HCT116 (cell line): ENCODE measurements at regions of chr2 and their contacts with region 1.

Region 1: GRCh38 chr2:222038067-222038802 is 260.6 kb downstream of the PAX3 start:
- DNase-seq: no peak
- ATAC-seq: no peak
- H3K4me3 ChIP-seq: no peak overlapping the region
- H3K27ac ChIP-seq: no peak overlapping the region
- H3K4me1 ChIP-seq: no peaks in the 10 kb centered on the region
- H3K27me3 ChIP-seq: peaks cover 11% of the 10 kb centered on the region; the same call in 1 of the 2 replicates
- CTCF ChIP-seq: peak in 2 of 3 experiments; percentile 36 to 57; a peak in 3 of 6 replicates
- POLR2A ChIP-seq: no peak
- RAD21 ChIP-seq: peak; percentile 43

Region 2: GRCh38 chr2:222024932-222025880 is 13.0 kb before region 1 on chr2:
- CTCF ChIA-PET with region 1: interaction called, 48 read pairs
- POLR2A ChIA-PET with region 1: no interaction called
- RAD21 ChIA-PET with region 1: no interaction called
- intact Hi-C with region 1: no loop called
- DNase-seq: peak; percentile 39
- ATAC-seq: peak; percentile 81
- H3K4me3 ChIP-seq: no peak overlapping the region
- H3K27ac ChIP-seq: no peak overlapping the region
- H3K4me1 ChIP-seq: no peaks in the 10 kb centered on the region
- H3K27me3 ChIP-seq: peaks cover 7% of the 10 kb centered on the region; the same call in 1 of the 2 replicates
- CTCF ChIP-seq: peak; percentile 50 to 78 (median 71); a peak in 5 of 6 replicates
- POLR2A ChIP-seq: no peak
- RAD21 ChIP-seq: peak; percentile 68